ENCODE measurements at regions of chr9 and their contacts with region 1.

Region 1: DNA sequence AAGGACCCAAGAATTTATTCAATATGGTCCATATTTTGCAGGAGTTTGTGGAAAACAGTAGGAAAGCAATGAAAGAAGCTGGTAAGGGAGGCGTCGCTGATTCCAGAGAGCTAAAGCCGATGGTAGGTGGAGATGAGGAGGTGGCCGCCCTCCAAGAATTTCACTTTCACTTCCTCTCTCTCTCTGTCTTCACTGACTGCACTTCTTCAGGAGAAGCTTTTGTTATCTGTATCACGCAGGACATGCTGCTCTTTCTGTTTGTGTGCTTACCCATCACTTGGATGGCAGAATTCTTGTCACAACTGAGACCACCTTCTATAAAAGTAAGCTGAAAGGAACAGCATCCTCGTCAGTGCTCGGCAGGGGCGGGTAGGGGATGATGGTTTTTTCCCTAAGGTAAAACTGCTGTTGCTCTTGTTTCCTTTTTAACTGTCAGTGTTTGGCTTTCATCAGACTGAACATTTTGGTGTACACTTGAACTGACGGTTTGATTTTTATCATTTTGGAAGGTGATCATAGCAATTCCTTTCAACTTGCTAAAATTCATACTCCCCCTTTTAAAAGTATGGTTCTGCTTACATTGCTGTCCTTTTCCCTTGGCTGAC is 62.4 kb upstream of the FSD1L start:
- DNase-seq: peak; percentile 24
- H3K4me3 Mint-ChIP-seq: peak overlapping the region; percentile 82
- H3K27ac Mint-ChIP-seq: peak overlapping the region; percentile 69
- H3K4me1 Mint-ChIP-seq: peaks cover 22% of the 10 kb centered on the region
- H3K27me3 Mint-ChIP-seq: peaks cover 46% of the 10 kb centered on the region

Region 2: DNA sequence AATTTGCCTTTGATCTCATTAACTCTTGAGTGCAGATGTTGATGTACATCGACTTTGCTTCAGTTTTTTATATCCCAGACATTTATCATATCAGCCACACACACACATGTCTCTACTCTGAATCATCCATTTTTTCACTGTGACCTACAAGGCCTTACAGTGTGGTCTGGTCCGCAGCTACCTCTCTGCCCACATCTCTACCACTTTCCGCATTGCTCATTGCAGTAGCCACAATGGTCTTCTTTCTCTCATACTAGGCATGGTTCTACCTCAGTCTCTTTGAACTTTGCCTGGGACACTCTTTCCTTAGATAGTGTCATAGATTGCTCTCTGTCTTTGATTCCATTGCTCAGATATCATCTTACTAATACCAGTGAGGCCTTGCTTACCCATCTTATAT is 25.6 kb before region 1 on chr9:
- intact Hi-C with region 1: loop called (anchors 1 kb)
- DNase-seq: peak; percentile 18
- H3K4me3 Mint-ChIP-seq: no peak overlapping the region
- H3K27ac Mint-ChIP-seq: no peak overlapping the region
- H3K4me1 Mint-ChIP-seq: peaks cover 25% of the 10 kb centered on the region
- H3K27me3 Mint-ChIP-seq: peaks cover 35% of the 10 kb centered on the region